Posterior vena cava (tissue), 2 donors: ENCODE measurements at regions of chr3 and their contacts with region 1.

Region 1: GRCh38 chr3:163328680-163329079 is 1749.6 kb downstream of the SI start:
- DNase-seq: no peak

Region 2: GRCh38 chr3:163364717-163365116 is 36.0 kb after region 1 on chr3:
- intact Hi-C with region 1: loop called in 1 of 2 experiments (anchors 1 kb)
- DNase-seq: no peak